Activated CD8-positive, alpha-beta T cell treated with anti-CD3 and anti-CD28 coated beads for 36 hours (primary cell): ENCODE measurements at regions of chr16 and their contacts with region 1.

Region 1: DNA sequence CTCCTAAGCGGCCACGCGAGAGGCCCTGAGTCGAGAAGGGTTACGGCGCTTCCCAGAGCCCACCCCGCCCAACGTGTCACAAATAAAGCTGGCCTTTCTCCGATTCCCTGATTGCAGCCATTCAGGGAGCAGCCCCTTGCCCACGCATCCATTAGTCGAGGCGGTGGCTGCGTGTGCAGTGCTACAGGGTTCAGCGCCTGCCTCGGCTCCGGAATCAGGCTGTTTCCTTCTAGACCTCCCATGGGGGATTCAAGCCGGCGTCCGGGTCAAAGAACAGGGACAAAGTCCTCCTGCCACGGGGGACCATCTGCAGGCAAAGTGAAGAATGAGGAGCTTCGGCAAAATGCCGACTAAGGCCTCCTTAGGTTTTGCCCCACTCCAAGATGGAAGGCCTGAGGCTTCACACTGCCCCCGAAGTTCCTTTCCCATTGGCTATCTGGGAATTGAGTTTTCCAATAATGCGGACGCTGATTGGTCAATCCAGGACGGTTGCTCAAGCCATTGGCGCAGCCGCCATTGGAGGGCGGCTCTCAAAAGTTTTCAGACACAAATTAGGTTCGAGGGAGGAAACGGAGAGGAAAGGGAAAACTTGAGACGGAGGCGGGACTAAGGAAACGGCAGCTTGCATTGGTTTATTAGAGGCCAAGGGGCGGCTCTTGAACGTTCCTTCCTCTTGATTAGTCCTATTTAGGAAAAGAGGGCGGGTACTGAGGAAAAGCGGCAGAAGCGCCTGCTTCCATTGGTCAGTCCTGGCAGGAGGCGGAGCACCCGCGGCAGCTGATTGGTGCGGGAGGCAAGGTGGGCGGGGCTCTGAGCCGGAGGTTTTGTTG is 430 bp upstream of the KATNB1 start:
- DNase-seq: peak; percentile 99
- ATAC-seq: peak; percentile 93
- H3K4me3 Mint-ChIP-seq: peak overlapping the region; percentile 99
- H3K27ac Mint-ChIP-seq: peak overlapping the region; percentile 98
- H3K4me1 Mint-ChIP-seq: peaks cover 18% of the 10 kb centered on the region
- H3K27me3 Mint-ChIP-seq: no peaks in the 10 kb centered on the region
- CTCF ChIP-seq: no peak

Region 2: DNA sequence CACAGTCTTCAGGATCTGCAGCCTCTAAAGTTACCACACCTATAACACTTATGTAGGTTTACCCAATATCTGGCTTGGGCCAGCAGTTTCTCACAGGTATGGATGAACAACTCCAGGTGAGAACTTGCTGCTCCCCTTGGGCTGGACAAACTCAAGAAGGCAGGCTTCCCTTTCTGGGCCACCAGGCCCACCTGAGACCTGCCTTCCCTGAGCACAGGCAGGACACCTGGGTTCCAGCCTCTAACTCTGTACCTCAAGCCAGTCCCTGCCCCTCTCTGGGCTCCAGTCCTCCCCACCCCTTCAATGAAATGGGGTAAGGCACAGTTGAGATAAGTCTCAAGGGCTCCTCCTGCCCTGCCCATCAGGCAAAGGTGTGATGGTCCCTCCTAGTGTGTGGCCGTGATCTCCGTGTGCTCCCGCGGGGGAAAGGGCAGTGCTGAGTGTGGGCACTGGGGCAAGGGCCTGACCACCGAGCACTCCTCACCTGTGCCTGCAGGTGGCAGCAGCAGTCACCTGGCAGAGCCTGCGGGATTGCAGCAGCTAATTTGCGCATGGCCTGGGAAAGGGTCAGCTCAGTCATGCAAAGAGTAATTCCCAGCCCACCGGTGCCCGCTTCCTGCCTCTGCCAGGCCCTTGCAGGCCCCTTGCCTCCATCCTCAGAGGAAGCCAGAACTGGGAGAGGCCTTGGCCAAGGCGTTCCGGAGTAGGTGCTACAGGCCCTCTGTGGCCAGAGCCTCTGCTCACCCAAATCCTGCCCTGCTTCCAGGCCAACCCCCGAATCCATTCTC is 134.9 kb before region 1 on chr16:
- CTCF ChIA-PET with region 1: interaction called, 3 read pairs
- POLR2A ChIA-PET with region 1: no interaction called
- intact Hi-C with region 1: loop called (anchors 10 kb)
- DNase-seq: peak; percentile 61
- ATAC-seq: peak; percentile 19
- H3K4me3 Mint-ChIP-seq: no peak overlapping the region
- H3K27ac Mint-ChIP-seq: peak overlapping the region; percentile 71
- H3K4me1 Mint-ChIP-seq: peaks cover 57% of the 10 kb centered on the region
- H3K27me3 Mint-ChIP-seq: no peaks in the 10 kb centered on the region
- CTCF ChIP-seq: peak; percentile 81

Region 3: DNA sequence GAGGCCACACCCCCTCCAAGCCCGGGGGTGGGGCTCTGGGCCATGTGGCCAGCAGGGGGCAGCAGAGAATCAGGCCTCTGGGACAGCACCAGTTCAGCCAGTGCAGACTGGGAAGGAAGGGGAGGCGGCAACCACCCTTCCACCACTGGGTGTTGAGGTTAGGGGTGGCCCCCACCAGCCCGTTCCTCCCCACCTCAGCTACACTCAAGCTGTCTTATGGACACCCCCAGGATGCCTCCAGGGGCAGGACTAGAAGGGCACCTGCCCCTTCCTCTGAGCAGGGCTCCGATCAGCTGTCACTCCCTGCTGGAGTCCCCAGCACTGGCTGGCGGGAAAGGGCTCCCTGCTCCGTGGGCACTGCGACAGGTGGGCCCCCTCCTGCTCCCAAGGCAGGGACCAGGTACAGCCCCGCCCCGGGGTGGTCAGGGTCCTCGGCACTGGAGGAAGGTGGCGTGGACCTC is 22.2 kb after region 1 on chr16:
- CTCF ChIA-PET with region 1: interaction called, 24 read pairs
- POLR2A ChIA-PET with region 1: no interaction called
- intact Hi-C with region 1: no loop called
- DNase-seq: peak; percentile 88
- ATAC-seq: peak; percentile 97
- H3K4me3 Mint-ChIP-seq: no peak overlapping the region
- H3K27ac Mint-ChIP-seq: no peak overlapping the region
- H3K4me1 Mint-ChIP-seq: peaks cover 4% of the 10 kb centered on the region
- H3K27me3 Mint-ChIP-seq: no peaks in the 10 kb centered on the region
- CTCF ChIP-seq: peak; percentile 93

Region 4: GRCh38 chr16:57802341-57803133 is 67.4 kb after region 1 on chr16 and contains the start of gene KIFC3:
- CTCF ChIA-PET with region 1: no interaction called
- POLR2A ChIA-PET with region 1: no interaction called
- intact Hi-C with region 1: no loop called
- DNase-seq: peak; percentile 84
- ATAC-seq: peak; percentile 88
- H3K4me3 Mint-ChIP-seq: peak within 1 kb of the TSS; percentile 73
- H3K27ac Mint-ChIP-seq: peak within 1 kb of the TSS; percentile 76
- H3K4me1 Mint-ChIP-seq: peaks cover 25% of the 10 kb centered on the region
- H3K27me3 Mint-ChIP-seq: peaks cover 32% of the 10 kb centered on the region
- CTCF ChIP-seq: no peak
- total RNA-seq, gene KIFC3: 0.54 to 0.89 TPM